Dendritic cell treated with granulocyte-macrophage colony-stimulating factor and Interleukin-4, amounts not matched to agents 40 ng/mL and 50 ng/mL, for 4 days (primary cell): ENCODE measurements at regions of chr20 and their contacts with region 1.

Region 1: DNA sequence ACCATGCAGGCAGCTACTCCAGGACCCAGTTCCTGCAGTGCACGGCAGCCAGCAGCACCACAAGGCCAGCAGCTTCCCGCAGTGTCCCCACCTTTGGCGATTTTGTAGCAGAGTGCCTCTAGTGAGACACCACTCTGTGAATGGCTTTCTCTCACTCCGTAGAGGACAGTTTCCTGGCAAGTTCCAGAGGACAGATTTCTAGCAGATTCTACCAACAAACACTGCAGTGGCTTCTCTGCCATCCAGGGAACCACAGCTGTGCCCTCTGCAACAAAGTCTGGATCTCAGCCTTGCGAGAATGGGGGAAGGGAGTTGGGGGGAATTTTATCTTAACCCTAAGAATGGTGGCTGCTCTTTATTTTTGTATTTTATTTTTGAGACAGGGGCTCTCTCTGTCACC is 28.7 kb downstream of the SNHG17 start:
- H3K4me3 Mint-ChIP-seq: no peak overlapping the region
- H3K27ac Mint-ChIP-seq: no peak overlapping the region
- H3K4me1 Mint-ChIP-seq: no peaks in the 10 kb centered on the region
- H3K27me3 Mint-ChIP-seq: peaks cover 3% of the 10 kb centered on the region

Region 2: DNA sequence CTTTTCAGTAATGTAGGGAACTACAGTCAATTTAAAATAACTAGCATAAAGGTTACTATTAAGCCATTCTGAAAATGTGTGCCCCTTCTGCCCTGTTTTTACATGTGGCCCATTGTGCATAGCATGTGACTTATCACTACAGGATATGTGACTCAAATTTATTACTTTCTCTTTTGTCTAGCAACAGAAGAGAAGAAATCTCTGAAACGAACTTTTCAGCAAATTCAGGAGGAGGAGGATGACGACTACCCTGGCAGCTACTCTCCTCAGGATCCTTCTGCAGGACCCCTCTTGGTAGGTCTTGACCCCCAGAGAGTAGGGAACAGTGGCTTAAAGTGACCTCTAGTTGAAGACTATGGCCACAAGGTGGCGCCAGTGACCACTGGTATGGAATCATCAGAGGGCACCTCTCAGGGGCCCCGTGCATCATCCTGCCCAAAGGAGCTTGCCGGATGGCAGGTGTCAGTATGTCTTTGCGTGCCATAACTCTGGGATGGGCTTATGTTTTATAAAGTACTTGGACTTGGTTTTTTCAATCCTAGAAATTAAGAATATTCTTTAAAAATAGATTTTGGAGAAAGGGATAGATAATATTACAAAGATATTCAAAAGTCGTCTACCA is 349.0 kb before region 1 on chr20:
- intact Hi-C with region 1: loop called (anchors 5 kb)
- H3K4me3 Mint-ChIP-seq: no peak overlapping the region
- H3K27ac Mint-ChIP-seq: no peak overlapping the region
- H3K4me1 Mint-ChIP-seq: no peaks in the 10 kb centered on the region
- H3K27me3 Mint-ChIP-seq: no peaks in the 10 kb centered on the region

Region 3: DNA sequence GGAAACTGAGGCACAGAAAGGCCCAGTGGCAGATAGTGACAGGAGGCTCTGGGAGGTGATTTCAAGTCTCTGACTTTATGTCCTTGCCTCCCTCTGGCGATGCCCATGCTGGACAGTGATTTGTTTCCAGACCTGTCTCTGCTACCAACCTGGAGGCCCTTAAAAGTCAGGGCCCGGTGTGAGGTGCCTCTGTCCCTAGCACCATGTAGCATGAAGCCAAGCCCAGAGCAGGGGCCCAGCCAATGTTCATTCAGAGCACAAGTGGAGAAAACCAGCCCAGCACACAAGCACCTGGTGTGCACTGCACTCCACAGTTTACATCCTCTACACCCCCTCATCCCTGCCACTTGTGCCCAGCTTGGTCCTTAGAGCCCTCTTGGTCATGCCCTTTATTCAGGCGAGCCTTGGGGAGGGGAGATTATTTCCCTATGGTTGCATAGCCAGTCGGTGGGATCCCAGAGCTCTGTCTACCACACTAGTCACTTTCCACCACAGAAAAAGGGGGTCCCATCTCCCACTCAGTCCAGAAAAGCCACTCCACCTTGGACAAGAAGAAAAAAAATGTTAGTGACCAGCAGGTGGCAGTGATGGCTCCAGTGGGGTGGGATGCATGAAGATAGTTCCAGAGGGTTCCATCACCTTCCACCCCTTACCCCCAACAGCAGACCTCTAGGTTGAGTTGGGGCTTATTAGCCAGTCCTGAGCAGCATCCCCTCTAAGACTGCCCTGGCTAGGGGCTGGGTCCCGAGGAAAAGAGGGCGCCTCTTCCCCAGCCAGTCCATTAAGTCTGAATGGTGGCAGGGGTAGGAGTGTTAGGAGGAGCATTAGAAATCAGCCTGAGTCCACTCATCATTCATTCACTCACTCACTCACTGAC is 176.9 kb before region 1 on chr20:
- intact Hi-C with region 1: loop called (anchors 5 kb)
- H3K4me3 Mint-ChIP-seq: no peak overlapping the region
- H3K27ac Mint-ChIP-seq: no peak overlapping the region
- H3K4me1 Mint-ChIP-seq: peaks cover 24% of the 10 kb centered on the region
- H3K27me3 Mint-ChIP-seq: peaks cover 19% of the 10 kb centered on the region

Region 4: GRCh38 chr20:38357653-38358207 is 48.7 kb before region 1 on chr20:
- intact Hi-C with region 1: loop called (anchors 5 kb)
- H3K4me3 Mint-ChIP-seq: peak overlapping the region; percentile 53
- H3K27ac Mint-ChIP-seq: peak overlapping the region; percentile 84
- H3K4me1 Mint-ChIP-seq: peaks cover 39% of the 10 kb centered on the region
- H3K27me3 Mint-ChIP-seq: peaks cover 16% of the 10 kb centered on the region